Colonic mucosa (tissue), 4 donors: ENCODE measurements at regions of chr9 and their contacts with region 1.

Region 1: GRCh38 chr9:121634329-121635261 is 16.8 kb upstream of the DAB2IP start:
- DNase-seq: peak; percentile 51
- H3K4me3 ChIP-seq: no peak overlapping the region
- H3K27ac ChIP-seq: no peak overlapping the region
- H3K4me1 ChIP-seq: peaks cover 11% of the 10 kb centered on the region
- H3K27me3 ChIP-seq: no peaks in the 10 kb centered on the region
- CTCF ChIP-seq: peak; percentile 50

Region 2: DNA sequence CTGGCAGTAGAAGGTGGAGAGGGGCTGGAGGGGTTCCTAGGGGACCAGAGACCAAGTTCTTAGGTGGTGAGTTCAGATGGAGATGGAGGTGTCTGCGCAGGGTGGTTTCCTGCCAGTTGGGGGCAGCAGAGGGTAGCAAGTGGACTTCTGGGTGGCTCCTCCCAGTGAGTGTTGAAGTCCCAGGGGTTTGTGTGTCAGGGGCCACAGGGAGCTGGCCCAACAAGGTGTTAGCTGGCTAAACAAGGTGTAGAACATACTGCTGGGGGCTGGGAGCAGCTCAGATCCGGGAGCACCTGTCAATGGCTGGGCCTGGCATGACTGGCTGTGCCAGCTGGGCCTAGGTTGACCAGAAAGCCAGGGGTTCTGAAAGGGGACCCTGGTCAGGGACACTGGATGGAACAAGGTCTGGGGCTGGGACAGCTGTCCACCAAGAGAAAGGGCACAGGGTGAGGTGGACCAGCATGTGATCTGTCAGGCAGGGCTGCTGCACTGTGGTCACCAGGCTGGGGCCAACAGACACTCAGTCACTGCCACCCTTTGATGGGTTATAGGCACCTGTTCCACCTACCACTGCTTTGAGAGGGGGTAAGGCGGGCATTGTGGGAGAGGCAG is 52.4 kb after region 1 on chr9:
- intact Hi-C with region 1: loop called (anchors 5 kb)
- DNase-seq: peak; percentile 90
- H3K4me3 ChIP-seq: no peak overlapping the region
- H3K27ac ChIP-seq: no peak overlapping the region
- H3K4me1 ChIP-seq: peaks cover 3% of the 10 kb centered on the region
- H3K27me3 ChIP-seq: no peaks in the 10 kb centered on the region
- CTCF ChIP-seq: peak; percentile 90